ENCODE measurements at regions of chr16 and their contacts with region 1.

Region 1: DNA sequence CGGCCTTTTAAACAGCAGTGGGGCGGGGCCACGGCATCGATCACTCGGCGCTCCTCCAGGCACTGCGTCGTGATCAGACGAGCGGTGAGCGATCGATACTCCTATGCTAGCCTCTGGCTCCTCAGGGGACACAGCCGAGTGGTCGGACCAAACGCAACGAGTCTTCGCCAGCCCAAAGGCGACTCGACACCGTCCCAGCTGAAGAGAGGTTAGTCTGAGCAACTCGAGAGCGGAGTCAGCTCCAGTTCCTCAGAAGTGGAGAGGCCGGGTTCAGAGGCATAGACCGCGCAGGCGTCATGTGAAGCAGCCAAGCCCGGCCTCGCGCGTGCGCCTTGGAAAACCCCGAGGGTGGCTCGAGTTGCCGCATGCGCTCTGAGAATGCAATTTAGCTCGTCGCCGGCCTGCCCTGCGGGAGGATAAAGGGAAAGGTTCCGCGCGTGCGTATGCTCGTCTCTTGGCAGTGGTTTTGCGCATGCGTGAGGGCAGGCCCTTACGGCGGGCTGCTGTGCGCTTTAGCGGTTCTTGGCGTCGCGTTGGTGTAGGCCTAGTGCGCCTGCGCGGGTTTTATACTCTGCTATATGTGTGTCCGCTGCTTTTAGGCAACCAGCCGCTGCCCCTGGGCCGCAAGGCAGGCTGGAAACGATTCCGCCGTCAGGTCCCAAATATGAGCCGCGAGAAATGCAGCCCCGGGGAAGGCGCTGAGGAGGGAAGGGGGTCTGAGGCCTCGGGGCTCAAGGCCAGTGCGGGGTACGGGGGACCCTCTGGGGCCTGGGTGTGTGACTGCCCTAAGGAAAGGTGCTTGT is at the start of gene KDM8:
- DNase-seq: peak; percentile 99 to 100 (median 100)
- H3K4me3 ChIP-seq: peak within 1 kb of the TSS; percentile 61 to 85
- H3K4me3 Mint-ChIP-seq: peak within 1 kb of the TSS; percentile 97 to 100 (median 99)
- H3K27ac ChIP-seq: peak within 1 kb of the TSS; percentile 97
- H3K27ac Mint-ChIP-seq: peak within 1 kb of the TSS; percentile 92 to 100 (median 100)
- H3K4me1 ChIP-seq: peaks cover 60% of the 10 kb centered on the region
- H3K4me1 Mint-ChIP-seq: peaks cover 40 to 62% (median 48%) of the 10 kb centered on the region in 4 donors
- H3K27me3 ChIP-seq: no peaks in the 10 kb centered on the region
- H3K27me3 Mint-ChIP-seq: no peaks in the 10 kb centered on the region
- total RNA-seq, gene KDM8: 28.6 to 31.0 TPM

Region 2: GRCh38 chr16:26680671-26681070 is 523.0 kb before region 1 on chr16:
- CTCF ChIA-PET with region 1: no interaction called
- POLR2A ChIA-PET with region 1: no interaction called
- intact Hi-C with region 1: no loop called
- DNase-seq: no peak
- H3K4me3 ChIP-seq: no peak overlapping the region
- H3K4me3 Mint-ChIP-seq: no peak overlapping the region
- H3K27ac ChIP-seq: no peak overlapping the region
- H3K27ac Mint-ChIP-seq: no peak overlapping the region
- H3K4me1 ChIP-seq: no peaks in the 10 kb centered on the region
- H3K4me1 Mint-ChIP-seq: no peaks in the 10 kb centered on the region
- H3K27me3 ChIP-seq: no peaks in the 10 kb centered on the region
- H3K27me3 Mint-ChIP-seq: peaks cover 3 to 4% of the 10 kb centered on the region in 2 donors

Region 3: DNA sequence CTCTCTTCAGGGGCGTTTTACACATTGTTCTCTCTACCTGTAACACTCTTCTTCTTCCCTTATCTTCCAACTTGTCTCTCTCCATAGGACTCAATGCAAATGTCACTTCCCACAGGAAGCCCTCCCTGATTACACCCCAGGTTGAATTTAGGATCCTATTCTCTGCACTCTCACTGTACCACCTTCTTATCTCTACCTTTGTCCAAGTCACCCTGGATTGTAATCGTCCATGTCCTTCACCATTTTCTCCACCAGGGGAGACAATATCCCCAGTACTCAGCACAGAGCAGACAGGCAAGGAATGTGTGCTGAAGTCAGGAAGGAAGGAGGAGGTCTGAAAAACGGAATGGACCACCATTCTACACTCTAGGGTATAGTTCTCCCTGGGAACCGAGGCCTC is 122.8 kb before region 1 on chr16:
- CTCF ChIA-PET with region 1: no interaction called
- POLR2A ChIA-PET with region 1: no interaction called
- intact Hi-C with region 1: no loop called
- DNase-seq: peak in 1 of 5 donors; percentile 3
- H3K4me3 ChIP-seq: no peak overlapping the region
- H3K4me3 Mint-ChIP-seq: no peak overlapping the region
- H3K27ac ChIP-seq: no peak overlapping the region
- H3K27ac Mint-ChIP-seq: no peak overlapping the region
- H3K4me1 ChIP-seq: no peaks in the 10 kb centered on the region
- H3K4me1 Mint-ChIP-seq: peaks cover 0 to 2% (median 0%) of the 10 kb centered on the region in 4 donors
- H3K27me3 ChIP-seq: no peaks in the 10 kb centered on the region
- H3K27me3 Mint-ChIP-seq: peaks cover 21 to 42% of the 10 kb centered on the region in 2 donors

Region 4: GRCh38 chr16:27169511-27170071 is 34.0 kb before region 1 on chr16:
- CTCF ChIA-PET with region 1: interaction called, 7 read pairs
- POLR2A ChIA-PET with region 1: interaction called, 50 read pairs
- intact Hi-C with region 1: no loop called
- DNase-seq: peak; percentile 86 to 93 (median 87)
- H3K4me3 ChIP-seq: no peak overlapping the region
- H3K4me3 Mint-ChIP-seq: peak overlapping the region in 7 of 8 donors; percentile 35 to 77 (median 74)
- H3K27ac ChIP-seq: no peak overlapping the region
- H3K27ac Mint-ChIP-seq: peak overlapping the region; percentile 82 to 98 (median 96)
- H3K4me1 ChIP-seq: peaks cover 67% of the 10 kb centered on the region
- H3K4me1 Mint-ChIP-seq: peaks cover 46 to 74% (median 64%) of the 10 kb centered on the region in 4 donors
- H3K27me3 ChIP-seq: no peaks in the 10 kb centered on the region
- H3K27me3 Mint-ChIP-seq: no peaks in the 10 kb centered on the region

Region 5: DNA sequence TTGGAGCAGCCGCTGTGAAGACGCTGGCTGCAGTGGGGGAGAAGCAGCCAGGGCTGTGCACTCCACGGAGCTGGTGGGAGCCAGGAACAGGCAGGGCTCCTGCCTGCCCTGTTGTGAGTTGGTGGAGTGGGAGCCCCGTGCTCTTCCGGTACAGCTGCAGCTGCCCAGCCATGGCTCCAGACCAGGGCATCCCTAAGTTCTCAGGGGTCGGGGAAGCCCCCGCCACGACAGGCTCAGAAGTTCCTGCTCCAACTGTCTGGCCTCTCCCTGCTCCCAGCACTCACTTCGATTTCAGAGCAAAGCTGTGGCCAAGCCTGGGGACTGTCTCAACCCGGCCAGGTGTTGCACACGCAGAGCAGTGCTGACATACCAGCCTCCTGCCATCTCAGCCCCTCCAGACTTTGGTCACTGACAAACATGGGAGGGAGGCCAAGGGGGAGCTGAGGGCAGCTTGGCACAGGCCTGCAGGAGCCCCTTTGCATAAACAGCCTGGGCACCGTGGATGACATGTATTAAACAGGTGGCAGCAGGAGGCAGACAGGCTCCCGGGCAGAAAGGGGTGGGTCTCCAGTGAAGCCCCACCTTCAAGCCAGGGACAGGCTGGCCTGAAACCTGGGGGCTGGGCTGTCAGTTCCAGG is 14.2 kb before region 1 on chr16:
- CTCF ChIA-PET with region 1: interaction called, 4 read pairs
- POLR2A ChIA-PET with region 1: interaction called, 33 read pairs
- intact Hi-C with region 1: no loop called
- DNase-seq: no peak
- H3K4me3 ChIP-seq: no peak overlapping the region
- H3K4me3 Mint-ChIP-seq: no peak overlapping the region
- H3K27ac ChIP-seq: no peak overlapping the region
- H3K27ac Mint-ChIP-seq: no peak overlapping the region
- H3K4me1 ChIP-seq: peaks cover 6% of the 10 kb centered on the region
- H3K4me1 Mint-ChIP-seq: peaks cover 7 to 23% (median 11%) of the 10 kb centered on the region in 4 donors
- H3K27me3 ChIP-seq: no peaks in the 10 kb centered on the region
- H3K27me3 Mint-ChIP-seq: no peaks in the 10 kb centered on the region

Region 6: DNA sequence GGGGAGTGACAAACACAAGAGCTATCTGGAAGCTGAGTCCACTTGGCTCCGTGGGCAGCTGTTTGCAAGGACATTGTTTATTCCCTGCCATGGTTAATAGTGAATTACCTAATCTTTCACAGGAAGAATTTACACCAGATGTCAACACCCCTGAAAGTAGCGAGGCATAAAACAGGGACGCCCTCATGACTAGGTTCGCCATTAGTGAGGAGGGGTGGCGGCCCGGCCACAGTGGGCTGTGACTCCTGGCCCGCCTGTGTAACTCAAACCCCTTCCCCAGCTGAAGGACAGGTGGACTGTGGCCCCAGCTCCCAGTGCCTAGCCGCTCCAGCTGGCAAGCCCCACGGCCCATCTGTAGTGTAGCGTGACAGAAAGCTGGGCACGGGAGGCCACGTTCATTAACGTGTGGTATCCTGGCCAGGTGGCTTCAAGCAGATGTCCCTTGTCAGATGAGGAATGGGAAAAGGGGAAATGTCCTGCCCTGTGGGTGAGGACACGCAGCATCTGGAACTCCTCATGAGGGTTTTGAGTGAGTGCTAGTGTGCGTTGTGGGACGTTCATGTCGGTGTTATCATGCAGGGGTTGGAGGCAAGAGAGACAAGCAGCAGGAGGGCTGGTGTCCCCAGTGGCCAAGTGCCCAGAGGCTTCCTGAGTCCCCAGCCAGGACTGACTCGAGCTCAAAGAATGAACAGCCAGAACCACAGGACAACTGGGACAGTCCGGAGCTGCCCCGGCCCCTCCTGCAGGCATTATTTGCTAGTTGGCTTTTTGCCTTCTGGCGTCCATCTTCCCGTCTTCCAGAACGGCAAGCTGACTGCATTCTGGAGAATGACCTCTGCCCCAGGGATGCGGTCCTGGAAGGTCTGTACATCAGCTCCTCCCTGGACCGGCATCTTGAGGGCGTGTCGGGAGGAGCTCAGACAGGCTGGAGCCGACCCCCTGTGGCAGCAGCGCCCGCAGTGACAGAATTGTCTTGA is 18.9 kb after region 1 on chr16:
- CTCF ChIA-PET with region 1: interaction called, 4 read pairs
- POLR2A ChIA-PET with region 1: interaction called, 23 read pairs
- intact Hi-C with region 1: no loop called
- DNase-seq: no peak
- H3K4me3 ChIP-seq: no peak overlapping the region
- H3K4me3 Mint-ChIP-seq: no peak overlapping the region
- H3K27ac ChIP-seq: no peak overlapping the region
- H3K27ac Mint-ChIP-seq: peak overlapping the region in 6 of 7 donors; percentile 22 to 75 (median 48)
- H3K4me1 ChIP-seq: no peaks in the 10 kb centered on the region
- H3K4me1 Mint-ChIP-seq: peaks cover 7 to 23% (median 14%) of the 10 kb centered on the region in 4 donors
- H3K27me3 ChIP-seq: no peaks in the 10 kb centered on the region
- H3K27me3 Mint-ChIP-seq: no peaks in the 10 kb centered on the region

Region 7: DNA sequence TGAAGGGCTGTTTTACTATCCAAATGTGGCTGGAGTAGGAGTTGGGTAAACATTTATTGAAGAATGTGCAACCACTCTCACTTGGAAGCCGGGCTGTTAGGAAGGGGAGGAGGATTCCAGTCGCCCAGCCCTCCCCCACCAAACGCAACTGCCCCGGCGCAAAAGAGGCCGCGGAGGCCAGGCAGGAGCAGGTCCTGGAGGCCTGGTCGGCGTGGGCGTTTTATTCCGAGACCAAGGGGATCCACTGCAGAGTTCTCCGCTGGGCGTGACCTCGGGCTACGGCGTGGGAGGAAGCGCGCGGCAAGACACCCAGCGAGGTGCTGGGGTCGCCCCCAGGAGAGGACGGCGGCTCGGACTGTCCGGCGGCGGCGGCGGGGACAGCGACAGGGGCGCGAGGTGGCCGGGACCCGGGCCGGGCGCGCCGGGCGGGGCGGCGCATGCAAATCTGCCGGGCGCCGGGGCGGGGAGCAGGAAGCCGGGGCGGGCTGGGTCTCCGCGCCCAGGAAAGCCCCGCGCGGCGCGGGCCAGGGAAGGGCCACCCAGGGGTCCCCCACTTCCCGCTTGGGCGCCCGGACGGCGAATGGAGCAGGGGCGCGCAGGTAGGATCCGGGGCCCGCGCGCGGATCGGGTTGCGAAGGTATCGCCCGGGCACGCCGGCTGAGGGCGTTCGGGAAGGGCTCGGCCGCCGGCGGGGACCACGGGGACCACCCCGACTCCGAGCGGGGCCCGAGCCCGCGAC is 110.0 kb after region 1 on chr16 and contains the start of gene IL4R:
- CTCF ChIA-PET with region 1: interaction called, 3 read pairs
- POLR2A ChIA-PET with region 1: interaction called, 23 read pairs
- intact Hi-C with region 1: no loop called
- DNase-seq: peak; percentile 66 to 77 (median 69)
- H3K4me3 ChIP-seq: peak within 1 kb of the TSS; percentile 76 to 92
- H3K4me3 Mint-ChIP-seq: peak within 1 kb of the TSS; percentile 89 to 98 (median 94)
- H3K27ac ChIP-seq: peak within 1 kb of the TSS; percentile 96
- H3K27ac Mint-ChIP-seq: peak within 1 kb of the TSS; percentile 94 to 99 (median 99)
- H3K4me1 ChIP-seq: peaks cover 47% of the 10 kb centered on the region
- H3K4me1 Mint-ChIP-seq: peaks cover 30 to 53% (median 42%) of the 10 kb centered on the region in 4 donors
- H3K27me3 ChIP-seq: no peaks in the 10 kb centered on the region
- H3K27me3 Mint-ChIP-seq: no peaks in the 10 kb centered on the region
- total RNA-seq, gene IL4R: 143 to 152 TPM